ENCODE measurements at regions of chr10 and their contacts with region 1.

Region 1: GRCh38 chr10:98467506-98468346 is 21.0 kb upstream of the HPS1 start:
- DNase-seq: no peak
- H3K4me3 ChIP-seq: peak overlapping the region; percentile 42 to 77 (median 52)
- H3K27ac ChIP-seq: no peak overlapping the region
- H3K4me1 ChIP-seq: peaks cover 0 to 14% (median 3%) of the 10 kb centered on the region in 3 donors
- H3K27me3 ChIP-seq: peaks cover 0 to 12% (median 0%) of the 10 kb centered on the region in 4 donors
- CTCF ChIP-seq: peak; percentile 65 to 86 (median 76)
- POLR2A ChIP-seq: no peak

Region 2: GRCh38 chr10:99248824-99249223 is 781.1 kb after region 1 on chr10:
- intact Hi-C with region 1: loop called (anchors 10 kb)
- DNase-seq: no peak
- H3K4me3 ChIP-seq: no peak overlapping the region
- H3K27ac ChIP-seq: no peak overlapping the region
- H3K4me1 ChIP-seq: no peaks in the 10 kb centered on the region
- H3K27me3 ChIP-seq: no peaks in the 10 kb centered on the region
- CTCF ChIP-seq: no peak
- POLR2A ChIP-seq: no peak

Measured in esophagus squamous epithelium (tissue), 5 donors.